Ascending aorta (tissue), 2 donors: ENCODE measurements at regions of chr3 and their contacts with region 1.

Region 1: DNA sequence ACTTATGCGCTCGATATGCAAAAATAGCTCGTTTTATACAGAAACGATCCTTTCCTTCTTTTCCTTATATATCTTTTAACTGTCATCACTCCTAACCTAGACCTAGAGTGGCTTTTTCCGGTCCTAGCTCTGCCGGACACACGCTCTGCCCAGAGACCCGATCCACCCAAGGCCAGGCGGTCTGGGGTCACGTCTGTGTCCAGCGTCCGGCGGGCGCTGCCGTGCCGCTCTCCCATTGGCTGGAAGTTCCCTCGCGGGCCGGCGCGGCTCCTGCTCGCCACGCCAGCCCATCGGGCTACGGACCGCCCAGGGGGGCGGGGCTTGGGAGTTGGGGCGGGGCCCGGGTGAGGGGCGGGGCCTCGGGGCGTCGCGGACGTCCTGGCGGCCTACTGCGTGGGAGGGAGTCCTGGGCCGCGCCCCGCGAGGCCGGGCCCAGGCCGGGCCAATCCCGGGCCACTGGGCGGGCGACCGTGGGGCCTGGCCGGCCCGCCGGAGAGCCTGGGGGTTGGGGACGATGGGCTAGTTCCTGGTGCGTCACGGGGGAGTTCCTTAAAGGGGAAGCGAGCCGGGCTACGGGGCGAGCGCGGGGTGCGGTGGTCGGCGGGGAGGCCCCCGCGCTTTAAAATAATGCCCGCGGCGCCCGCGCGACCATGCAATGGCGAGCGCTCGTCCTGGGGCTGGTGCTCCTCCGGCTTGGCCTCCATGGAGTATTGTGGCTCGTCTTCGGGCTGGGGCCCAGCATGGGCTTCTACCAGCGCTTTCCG is at the start of gene EDEM1:
- DNase-seq: peak; percentile 85 to 97
- H3K4me3 ChIP-seq: peak within 1 kb of the TSS; percentile 77 to 84
- H3K27ac ChIP-seq: peak within 1 kb of the TSS; percentile 88 to 98
- H3K4me1 ChIP-seq: peaks cover 2 to 20% of the 10 kb centered on the region in 2 donors
- H3K27me3 ChIP-seq: no peaks in the 10 kb centered on the region
- CTCF ChIP-seq: no peak
- total RNA-seq, gene EDEM1: 27.2 TPM

Region 2: DNA sequence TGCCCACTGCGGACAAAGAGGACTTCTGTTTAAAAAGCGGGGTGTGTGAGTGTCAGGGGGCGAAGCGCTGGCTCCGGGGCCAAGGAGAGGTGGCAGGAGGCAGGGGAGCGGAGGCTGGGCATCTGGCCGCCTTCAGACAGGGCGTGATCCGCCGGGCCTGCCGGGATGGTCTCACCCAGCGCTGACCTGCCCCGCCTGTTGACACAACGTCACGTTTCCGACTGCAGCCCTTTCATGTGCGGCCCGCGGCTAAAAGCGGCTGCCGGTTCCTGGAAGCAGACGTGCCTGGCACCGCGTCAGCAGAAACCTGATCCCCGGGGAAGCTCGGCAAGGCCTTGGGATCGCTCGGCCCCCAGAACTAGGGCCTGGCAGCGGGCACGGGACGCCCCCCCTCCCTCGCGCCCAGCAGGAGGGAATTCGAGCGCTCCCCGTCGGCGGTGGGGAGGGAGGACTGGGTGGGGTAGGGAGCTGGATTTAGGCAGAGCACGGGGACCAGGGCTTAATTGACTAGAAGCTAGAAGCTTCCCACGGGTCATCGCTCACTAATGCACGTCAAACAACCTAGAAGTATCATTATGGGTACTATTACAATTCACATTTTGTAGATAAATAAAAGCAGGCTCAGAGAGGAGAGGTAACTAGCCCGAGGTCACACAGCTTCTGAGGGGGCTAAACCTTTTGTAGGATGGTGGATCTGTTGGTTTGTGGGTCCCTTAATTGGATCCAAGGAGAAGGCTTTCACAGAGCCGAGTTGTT is 200.4 kb before region 1 on chr3:
- intact Hi-C with region 1: loop called (anchors 5 kb)
- DNase-seq: peak; percentile 92 to 99
- H3K4me3 ChIP-seq: peak overlapping the region; percentile 46 to 58
- H3K27ac ChIP-seq: peak overlapping the region; percentile 97 to 99
- H3K4me1 ChIP-seq: peaks cover 29 to 52% of the 10 kb centered on the region in 2 donors
- H3K27me3 ChIP-seq: no peaks in the 10 kb centered on the region
- CTCF ChIP-seq: peak in 1 of 3 experiments; percentile 22

Region 3: DNA sequence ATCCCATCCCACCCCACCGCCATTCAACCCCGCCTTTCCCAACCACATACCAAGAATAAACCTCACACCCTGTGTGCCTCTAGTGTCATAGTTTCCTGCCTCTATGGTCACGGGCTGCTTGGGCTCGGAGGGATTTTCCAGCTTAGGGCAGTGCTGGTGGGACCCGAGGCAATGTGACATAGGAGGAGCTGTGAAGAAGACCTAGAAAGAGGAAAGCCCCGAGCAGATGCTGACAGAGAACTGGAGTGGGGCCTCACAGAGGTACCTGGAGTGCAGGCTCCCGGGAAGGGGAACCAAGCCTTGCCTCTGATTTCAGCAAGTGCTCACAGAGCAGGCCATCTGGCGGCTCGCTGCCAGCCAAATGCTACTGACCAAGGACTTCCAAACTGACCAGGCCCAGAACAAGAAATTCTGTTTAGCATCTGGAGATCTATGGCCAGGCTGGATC is 180.6 kb before region 1 on chr3:
- intact Hi-C with region 1: no loop called
- DNase-seq: no peak
- H3K4me3 ChIP-seq: no peak overlapping the region
- H3K27ac ChIP-seq: no peak overlapping the region
- H3K4me1 ChIP-seq: no peaks in the 10 kb centered on the region
- H3K27me3 ChIP-seq: no peaks in the 10 kb centered on the region
- CTCF ChIP-seq: no peak

Region 4: GRCh38 chr3:5122030-5122740 is 65.2 kb before region 1 on chr3 and contains the start of gene ARL8B:
- intact Hi-C with region 1: loop called (anchors 1 kb)
- DNase-seq: peak; percentile 42 to 94
- H3K4me3 ChIP-seq: peak within 1 kb of the TSS; percentile 87 to 98
- H3K27ac ChIP-seq: peak within 1 kb of the TSS; percentile 92 to 93
- H3K4me1 ChIP-seq: peaks cover 0 to 25% of the 10 kb centered on the region in 2 donors
- H3K27me3 ChIP-seq: no peaks in the 10 kb centered on the region
- CTCF ChIP-seq: peak; percentile 94 to 96 (median 94)
- total RNA-seq, gene ARL8B: 6.4 TPM

Region 5: GRCh38 chr3:5317557-5317956 is 130.2 kb after region 1 on chr3:
- intact Hi-C with region 1: no loop called
- DNase-seq: no peak
- H3K4me3 ChIP-seq: no peak overlapping the region
- H3K27ac ChIP-seq: no peak overlapping the region
- H3K4me1 ChIP-seq: no peaks in the 10 kb centered on the region
- H3K27me3 ChIP-seq: no peaks in the 10 kb centered on the region
- CTCF ChIP-seq: no peak